CD4-positive, alpha-beta T cell (primary cell): ENCODE measurements at regions of chr5 and their contacts with region 1.

Region 1: GRCh38 chr5:34007621-34008600 is at the start of gene AMACR:
- DNase-seq: peak; percentile 62 to 97 (median 89)
- ATAC-seq: peak; percentile 95
- H3K4me3 ChIP-seq: peak within 1 kb of the TSS; percentile 82
- H3K4me3 Mint-ChIP-seq: peak within 1 kb of the TSS; percentile 96
- H3K27ac ChIP-seq: peak within 1 kb of the TSS; percentile 79 to 81
- H3K27ac Mint-ChIP-seq: peak within 1 kb of the TSS; percentile 95
- H3K4me1 ChIP-seq: peaks cover 9% of the 10 kb centered on the region
- H3K4me1 Mint-ChIP-seq: peaks cover 41% of the 10 kb centered on the region
- H3K27me3 ChIP-seq: no peaks in the 10 kb centered on the region
- H3K27me3 Mint-ChIP-seq: no peaks in the 10 kb centered on the region
- CTCF ChIP-seq: no peak
- total RNA-seq, gene AMACR: 1.3 to 1.4 TPM

Region 2: GRCh38 chr5:32444431-32445286 is 1563.3 kb before region 1 on chr5 and contains the start of gene ZFR:
- CTCF ChIA-PET with region 1: no interaction called
- POLR2A ChIA-PET with region 1: no interaction called
- intact Hi-C with region 1: loop called in 1 of 2 experiments (anchors 10 kb)
- DNase-seq: peak; percentile 84 to 98 (median 92)
- ATAC-seq: peak; percentile 92
- H3K4me3 ChIP-seq: peak within 1 kb of the TSS; percentile 89
- H3K4me3 Mint-ChIP-seq: peak within 1 kb of the TSS; percentile 93
- H3K27ac ChIP-seq: peak within 1 kb of the TSS; percentile 88 to 91
- H3K27ac Mint-ChIP-seq: peak within 1 kb of the TSS; percentile 89
- H3K4me1 ChIP-seq: peaks cover 26% of the 10 kb centered on the region
- H3K4me1 Mint-ChIP-seq: peaks cover 32% of the 10 kb centered on the region
- H3K27me3 ChIP-seq: no peaks in the 10 kb centered on the region
- H3K27me3 Mint-ChIP-seq: no peaks in the 10 kb centered on the region
- CTCF ChIP-seq: no peak
- total RNA-seq, gene ZFR: 58.8 to 61.0 TPM

Region 3: GRCh38 chr5:32703957-32704356 is 1304.0 kb before region 1 on chr5:
- CTCF ChIA-PET with region 1: no interaction called
- POLR2A ChIA-PET with region 1: no interaction called
- intact Hi-C with region 1: no loop called
- DNase-seq: no peak
- ATAC-seq: no peak
- H3K4me3 ChIP-seq: no peak overlapping the region
- H3K4me3 Mint-ChIP-seq: no peak overlapping the region
- H3K27ac ChIP-seq: no peak overlapping the region
- H3K27ac Mint-ChIP-seq: no peak overlapping the region
- H3K4me1 ChIP-seq: peaks cover 2% of the 10 kb centered on the region
- H3K4me1 Mint-ChIP-seq: peaks cover 3% of the 10 kb centered on the region
- H3K27me3 ChIP-seq: peaks cover 8 to 12% of the 10 kb centered on the region in 2 experiments
- H3K27me3 Mint-ChIP-seq: peaks cover 45% of the 10 kb centered on the region
- CTCF ChIP-seq: no peak

Region 4: GRCh38 chr5:33440482-33441240 is 567.2 kb before region 1 on chr5 and contains the start of gene TARS1:
- CTCF ChIA-PET with region 1: no interaction called
- POLR2A ChIA-PET with region 1: interaction called, 3 read pairs
- intact Hi-C with region 1: loop called (anchors 1 to 2 kb)
- DNase-seq: peak; percentile 79 to 97 (median 88)
- ATAC-seq: peak; percentile 92
- H3K4me3 ChIP-seq: peak within 1 kb of the TSS; percentile 86
- H3K4me3 Mint-ChIP-seq: no peak within 1 kb of the TSS
- H3K27ac ChIP-seq: peak within 1 kb of the TSS; percentile 65 to 73
- H3K27ac Mint-ChIP-seq: no peak within 1 kb of the TSS
- H3K4me1 ChIP-seq: peaks cover 22% of the 10 kb centered on the region
- H3K4me1 Mint-ChIP-seq: peaks cover 25% of the 10 kb centered on the region
- H3K27me3 ChIP-seq: no peaks in the 10 kb centered on the region
- H3K27me3 Mint-ChIP-seq: no peaks in the 10 kb centered on the region
- CTCF ChIP-seq: no peak
- total RNA-seq, gene TARS1: 31.3 to 32.0 TPM

Region 5: GRCh38 chr5:34022121-34022705 is 14.3 kb after region 1 on chr5:
- CTCF ChIA-PET with region 1: no interaction called
- POLR2A ChIA-PET with region 1: interaction called, 15 read pairs
- intact Hi-C with region 1: no loop called
- DNase-seq: peak in 3 of 14 experiments; percentile 15 to 41 (median 21)
- ATAC-seq: peak; percentile 46
- H3K4me3 ChIP-seq: no peak overlapping the region
- H3K4me3 Mint-ChIP-seq: no peak overlapping the region
- H3K27ac ChIP-seq: no peak overlapping the region
- H3K27ac Mint-ChIP-seq: peak overlapping the region; percentile 82
- H3K4me1 ChIP-seq: peaks cover 7% of the 10 kb centered on the region
- H3K4me1 Mint-ChIP-seq: peaks cover 25% of the 10 kb centered on the region
- H3K27me3 ChIP-seq: no peaks in the 10 kb centered on the region
- H3K27me3 Mint-ChIP-seq: no peaks in the 10 kb centered on the region
- CTCF ChIP-seq: no peak

Region 6: GRCh38 chr5:34034534-34035327 is 26.8 kb after region 1 on chr5:
- CTCF ChIA-PET with region 1: no interaction called
- POLR2A ChIA-PET with region 1: no interaction called
- intact Hi-C with region 1: no loop called
- DNase-seq: no peak
- ATAC-seq: no peak
- H3K4me3 ChIP-seq: no peak overlapping the region
- H3K4me3 Mint-ChIP-seq: no peak overlapping the region
- H3K27ac ChIP-seq: no peak overlapping the region
- H3K27ac Mint-ChIP-seq: no peak overlapping the region
- H3K4me1 ChIP-seq: no peaks in the 10 kb centered on the region
- H3K4me1 Mint-ChIP-seq: no peaks in the 10 kb centered on the region
- H3K27me3 ChIP-seq: no peaks in the 10 kb centered on the region
- H3K27me3 Mint-ChIP-seq: no peaks in the 10 kb centered on the region
- CTCF ChIP-seq: no peak

Region 7: GRCh38 chr5:34915139-34915855 is 907.4 kb after region 1 on chr5 and contains the starts of genes BRIX1 and RAD1:
- CTCF ChIA-PET with region 1: no interaction called
- POLR2A ChIA-PET with region 1: interaction called, 4 read pairs
- intact Hi-C with region 1: loop called in 1 of 2 experiments (anchors 5 kb)
- DNase-seq: peak; percentile 87 to 97 (median 90)
- ATAC-seq: peak; percentile 96
- H3K4me3 ChIP-seq: peak within 1 kb of the TSS; percentile 91
- H3K4me3 Mint-ChIP-seq: peak within 1 kb of the TSS; percentile 77
- H3K27ac ChIP-seq: peak within 1 kb of the TSS; percentile 84 to 88
- H3K27ac Mint-ChIP-seq: no peak within 1 kb of the TSS
- H3K4me1 ChIP-seq: peaks cover 27% of the 10 kb centered on the region
- H3K4me1 Mint-ChIP-seq: peaks cover 35% of the 10 kb centered on the region
- H3K27me3 ChIP-seq: no peaks in the 10 kb centered on the region
- H3K27me3 Mint-ChIP-seq: no peaks in the 10 kb centered on the region
- CTCF ChIP-seq: no peak
- total RNA-seq, gene BRIX1: 29.7 to 30.2 TPM
- total RNA-seq, gene RAD1: 26.7 to 29.2 TPM